H1 (cell line): ENCODE measurements at regions of chr4 and their contacts with region 1.

Region 1: DNA sequence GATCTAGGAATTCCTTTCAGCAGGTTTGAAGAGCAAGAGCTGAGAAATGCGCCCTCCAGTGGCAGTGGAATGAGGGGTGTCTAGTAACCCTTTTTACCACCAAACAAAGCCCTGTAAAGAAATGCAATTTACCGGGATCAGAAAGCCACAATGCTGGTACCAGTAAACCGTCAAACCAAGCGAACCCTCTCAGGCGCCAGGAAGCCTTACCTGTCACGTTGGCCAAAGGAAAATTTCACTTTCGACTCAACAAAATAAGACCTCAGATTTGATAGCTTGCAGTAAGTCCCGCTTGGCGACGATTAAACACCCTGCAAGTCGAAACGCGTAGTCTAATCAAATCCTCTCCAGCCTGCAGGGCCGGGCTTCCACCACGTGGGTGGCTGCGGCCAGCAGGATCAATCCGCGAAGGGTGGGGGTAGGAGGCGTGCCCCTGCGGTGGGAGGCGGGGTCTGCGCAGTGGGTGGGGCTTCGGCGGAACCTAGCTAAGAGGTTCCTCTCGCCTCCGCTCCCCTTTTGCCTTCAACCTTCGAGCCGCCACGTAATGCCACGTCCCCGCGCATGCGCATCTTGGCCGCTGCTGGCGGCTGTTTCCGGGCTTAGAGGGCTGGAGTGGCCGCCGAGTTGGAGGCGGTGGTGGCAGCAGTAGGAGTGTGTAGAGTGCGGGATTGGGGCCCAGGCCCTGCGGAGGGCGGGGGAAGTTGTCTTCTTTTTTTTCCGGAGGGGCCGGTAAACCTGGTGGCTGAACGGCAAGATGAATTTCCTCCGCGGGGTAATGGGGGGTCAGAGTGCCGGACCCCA is at the start of gene USO1:
- DNase-seq: peak; percentile 97 to 100
- H3K4me3 ChIP-seq: peak within 1 kb of the TSS; percentile 80 to 98 (median 90)
- H3K27ac ChIP-seq: peak within 1 kb of the TSS; percentile 98
- H3K4me1 ChIP-seq: peaks cover 0 to 9% (median 2%) of the 10 kb centered on the region in 4 experiments; a peak in 6 of 7 replicates
- H3K27me3 ChIP-seq: no peaks in the 10 kb centered on the region
- CTCF ChIP-seq: peak in 2 of 3 experiments; percentile 77 to 85; a peak in 3 of 4 replicates
- EP300 ChIP-seq: no peak
- POLR2A ChIP-seq: peak; percentile 94 to 97
- RAD21 ChIP-seq: peak; percentile 64 to 73
- total RNA-seq, gene USO1: 190 and 198 TPM in 2 replicates

Region 2: DNA sequence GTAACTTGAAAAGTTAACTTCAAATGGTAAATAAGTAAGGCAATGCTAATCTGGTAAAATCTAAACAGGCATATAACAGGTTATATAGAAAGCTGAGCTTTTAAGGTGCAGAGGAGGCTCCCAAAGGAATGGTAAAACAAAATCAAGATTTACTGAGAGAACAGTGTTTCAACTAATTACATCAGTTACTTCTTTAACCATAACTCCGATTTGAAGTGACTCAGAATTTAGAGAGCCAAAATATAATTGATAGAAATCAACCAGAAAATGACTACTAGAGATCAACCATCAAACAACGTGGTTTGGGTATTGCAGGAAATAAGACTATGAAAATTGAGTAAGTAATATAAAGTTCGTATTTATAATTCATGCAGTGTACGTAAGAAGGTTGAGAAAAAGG is 58.0 kb before region 1 on chr4:
- CTCF ChIA-PET with region 1: interaction called, 36 read pairs
- POLR2A ChIA-PET with region 1: interaction called, 117 read pairs
- DNase-seq: no peak
- H3K4me3 ChIP-seq: peak overlapping the region in 1 of 4 experiments; percentile 14; a peak in 2 of 8 replicates
- H3K27ac ChIP-seq: no peak overlapping the region
- H3K4me1 ChIP-seq: peaks cover 0 to 4% (median 3%) of the 10 kb centered on the region in 4 experiments; a peak in 4 of 7 replicates
- H3K27me3 ChIP-seq: no peaks in the 10 kb centered on the region
- CTCF ChIP-seq: no peak
- EP300 ChIP-seq: no peak
- POLR2A ChIP-seq: no peak
- RAD21 ChIP-seq: no peak

Region 3: GRCh38 chr4:75698162-75698962 is 25.9 kb before region 1 on chr4:
- CTCF ChIA-PET with region 1: interaction called, 9 read pairs
- POLR2A ChIA-PET with region 1: interaction called, 11 read pairs
- DNase-seq: no peak
- H3K4me3 ChIP-seq: no peak overlapping the region
- H3K27ac ChIP-seq: 0 out of 2 replicates have a peak overlapping the region, but pooled peaks have one; percentile 32
- H3K4me1 ChIP-seq: peaks cover 7 to 13% (median 10%) of the 10 kb centered on the region in 4 experiments; a peak in 6 of 7 replicates
- H3K27me3 ChIP-seq: no peaks in the 10 kb centered on the region
- CTCF ChIP-seq: peak in 1 of 3 experiments; percentile 24; a peak in 1 of 4 replicates
- EP300 ChIP-seq: no peak
- POLR2A ChIP-seq: no peak
- RAD21 ChIP-seq: peak; percentile 16 to 30; a peak in 2 of 4 replicates

Region 4: GRCh38 chr4:75736862-75737261 is 12.6 kb after region 1 on chr4:
- CTCF ChIA-PET with region 1: interaction called, 8 read pairs
- POLR2A ChIA-PET with region 1: interaction called, 16 read pairs
- DNase-seq: no peak
- H3K4me3 ChIP-seq: no peak overlapping the region
- H3K27ac ChIP-seq: no peak overlapping the region
- H3K4me1 ChIP-seq: no peaks in the 10 kb centered on the region
- H3K27me3 ChIP-seq: no peaks in the 10 kb centered on the region
- CTCF ChIP-seq: no peak
- EP300 ChIP-seq: no peak
- POLR2A ChIP-seq: no peak
- RAD21 ChIP-seq: no peak

Region 5: DNA sequence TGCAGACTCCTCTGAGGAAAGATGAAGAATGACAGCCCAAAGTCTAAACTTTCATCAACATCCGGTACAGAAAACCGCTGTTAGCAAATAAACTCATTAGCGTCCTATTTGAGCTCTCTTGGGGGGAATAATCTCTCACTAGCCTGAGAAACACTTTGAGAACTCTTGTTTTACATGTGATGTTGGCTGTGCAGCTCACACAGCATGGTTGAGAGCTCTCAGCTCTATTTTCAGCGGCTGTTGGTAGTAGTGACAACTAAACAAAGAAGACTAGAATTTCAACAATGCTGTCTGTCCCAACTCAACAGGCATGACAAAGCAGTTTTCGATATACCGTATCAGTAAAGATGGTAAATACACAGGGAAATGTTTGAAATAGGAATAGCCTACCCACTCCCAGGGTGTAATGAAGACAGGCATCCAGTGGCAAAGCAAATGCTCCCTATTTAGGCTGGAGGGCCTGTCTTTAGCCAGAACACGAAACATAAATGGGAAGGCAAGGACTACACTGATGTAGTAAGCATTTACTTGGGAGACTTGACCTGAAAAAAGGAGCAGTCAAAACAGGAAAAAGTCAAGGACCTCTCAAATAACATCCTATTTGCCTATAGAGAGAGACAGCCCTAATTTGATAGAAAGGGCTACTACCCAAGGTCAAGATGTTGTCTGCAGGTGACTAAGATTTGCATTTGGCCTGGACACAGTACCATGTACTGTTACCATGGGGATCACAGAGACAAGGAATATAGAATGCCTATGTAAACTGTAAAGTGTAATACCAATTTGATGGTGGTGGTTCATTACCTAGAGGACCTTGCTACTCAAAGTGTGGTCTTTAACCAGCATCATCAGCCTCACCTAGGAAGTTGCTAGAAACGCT is 117.6 kb after region 1 on chr4:
- CTCF ChIA-PET with region 1: no interaction called
- POLR2A ChIA-PET with region 1: no interaction called
- DNase-seq: no peak
- H3K4me3 ChIP-seq: no peak overlapping the region
- H3K27ac ChIP-seq: no peak overlapping the region
- H3K4me1 ChIP-seq: peaks cover 0 to 8% (median 4%) of the 10 kb centered on the region in 4 experiments; a peak in 3 of 7 replicates
- H3K27me3 ChIP-seq: peaks cover 0 to 2% (median 0%) of the 10 kb centered on the region in 4 experiments; a peak in 1 of 7 replicates
- CTCF ChIP-seq: no peak
- EP300 ChIP-seq: no peak
- POLR2A ChIP-seq: no peak
- RAD21 ChIP-seq: no peak